CD4-positive, alpha-beta memory T cell (primary cell): ENCODE measurements at regions of chr16 and their contacts with region 1.

Region 1: GRCh38 chr16:26524281-26524680 is 542.4 kb upstream of the C16orf82 start:
- DNase-seq: no peak
- H3K4me3 ChIP-seq: no peak overlapping the region
- H3K4me3 Mint-ChIP-seq: no peak overlapping the region
- H3K27ac ChIP-seq: no peak overlapping the region
- H3K27ac Mint-ChIP-seq: no peak overlapping the region
- H3K4me1 ChIP-seq: no peaks in the 10 kb centered on the region
- H3K4me1 Mint-ChIP-seq: no peaks in the 10 kb centered on the region
- H3K27me3 ChIP-seq: no peaks in the 10 kb centered on the region
- H3K27me3 Mint-ChIP-seq: peaks cover 3 to 8% of the 10 kb centered on the region in 2 donors

Region 2: GRCh38 chr16:26475596-26475995 is 48.7 kb before region 1 on chr16:
- CTCF ChIA-PET with region 1: no interaction called
- POLR2A ChIA-PET with region 1: no interaction called
- intact Hi-C with region 1: loop called (anchors 5 kb)
- DNase-seq: no peak
- H3K4me3 ChIP-seq: no peak overlapping the region
- H3K4me3 Mint-ChIP-seq: no peak overlapping the region
- H3K27ac ChIP-seq: no peak overlapping the region
- H3K27ac Mint-ChIP-seq: no peak overlapping the region
- H3K4me1 ChIP-seq: no peaks in the 10 kb centered on the region
- H3K4me1 Mint-ChIP-seq: no peaks in the 10 kb centered on the region
- H3K27me3 ChIP-seq: no peaks in the 10 kb centered on the region
- H3K27me3 Mint-ChIP-seq: no peaks in the 10 kb centered on the region

Region 3: DNA sequence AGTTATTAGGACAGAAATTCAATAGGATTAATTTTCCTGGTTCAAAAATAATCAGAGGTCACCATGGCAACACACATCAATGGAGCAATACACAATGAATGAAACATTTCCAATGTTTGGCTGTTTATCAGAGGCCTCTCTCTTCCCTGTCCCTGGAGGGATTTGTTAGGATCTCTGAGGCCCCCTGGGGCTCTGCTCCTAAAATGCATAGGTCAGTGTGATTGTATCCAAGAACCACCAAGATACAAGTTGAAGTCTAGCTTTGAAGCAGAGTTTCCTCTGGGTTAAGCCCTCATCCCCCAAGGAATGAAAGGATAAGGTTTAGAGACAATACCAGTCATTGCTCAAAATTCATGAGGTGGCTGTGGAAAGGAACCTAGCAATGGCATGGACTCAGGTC is 18.8 kb before region 1 on chr16:
- CTCF ChIA-PET with region 1: no interaction called
- POLR2A ChIA-PET with region 1: no interaction called
- intact Hi-C with region 1: no loop called
- DNase-seq: no peak
- H3K4me3 ChIP-seq: no peak overlapping the region
- H3K4me3 Mint-ChIP-seq: no peak overlapping the region
- H3K27ac ChIP-seq: no peak overlapping the region
- H3K27ac Mint-ChIP-seq: no peak overlapping the region
- H3K4me1 ChIP-seq: no peaks in the 10 kb centered on the region
- H3K4me1 Mint-ChIP-seq: no peaks in the 10 kb centered on the region
- H3K27me3 ChIP-seq: no peaks in the 10 kb centered on the region
- H3K27me3 Mint-ChIP-seq: peaks cover 0 to 2% of the 10 kb centered on the region in 2 donors

Region 4: DNA sequence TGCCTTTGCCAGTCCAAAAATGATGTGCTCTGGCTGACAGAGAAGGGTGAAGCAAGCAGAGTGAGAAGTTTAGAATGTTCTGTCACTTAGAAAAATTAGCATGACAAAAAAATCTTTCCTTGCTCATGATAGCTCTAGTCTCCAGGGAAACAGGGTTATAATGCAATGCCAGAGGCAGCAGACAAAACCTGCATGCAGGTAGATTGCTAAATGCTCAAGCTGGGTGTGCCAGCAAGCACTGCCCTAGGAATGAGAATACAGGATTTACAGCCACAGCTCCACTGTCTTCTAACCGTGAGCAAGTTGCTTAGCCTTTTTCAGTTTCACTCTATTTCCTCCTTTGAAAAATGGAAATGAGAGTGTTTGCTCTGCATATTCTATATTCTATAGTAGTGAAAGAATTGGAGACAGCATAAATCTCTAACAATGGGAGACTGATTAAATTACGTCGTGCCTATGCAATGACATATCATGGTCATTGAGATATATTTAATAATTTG is 25.9 kb after region 1 on chr16:
- CTCF ChIA-PET with region 1: no interaction called
- POLR2A ChIA-PET with region 1: no interaction called
- intact Hi-C with region 1: no loop called
- DNase-seq: no peak
- H3K4me3 ChIP-seq: no peak overlapping the region
- H3K4me3 Mint-ChIP-seq: no peak overlapping the region
- H3K27ac ChIP-seq: no peak overlapping the region
- H3K27ac Mint-ChIP-seq: no peak overlapping the region
- H3K4me1 ChIP-seq: no peaks in the 10 kb centered on the region
- H3K4me1 Mint-ChIP-seq: no peaks in the 10 kb centered on the region
- H3K27me3 ChIP-seq: no peaks in the 10 kb centered on the region
- H3K27me3 Mint-ChIP-seq: peaks cover 2 to 3% of the 10 kb centered on the region in 2 donors

Region 5: DNA sequence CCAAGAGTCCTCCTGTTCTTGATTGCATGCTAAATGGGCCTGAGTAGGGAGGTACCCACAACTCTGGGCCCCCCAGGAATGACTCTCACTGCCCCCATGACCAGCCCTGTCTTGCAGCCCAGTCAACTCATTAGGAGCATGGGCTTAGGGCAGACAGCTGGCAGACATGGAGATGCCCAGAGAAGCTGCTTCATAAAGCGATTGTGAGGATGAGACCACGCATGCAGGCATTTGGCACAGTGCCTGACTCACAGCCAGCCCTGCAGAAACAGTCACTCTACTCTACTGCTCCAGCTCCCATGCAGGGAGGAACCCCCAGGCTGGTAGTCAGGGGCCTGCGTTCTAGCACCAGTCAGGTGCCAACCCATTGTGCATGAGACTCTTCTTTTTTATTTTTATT is 534.0 kb after region 1 on chr16:
- CTCF ChIA-PET with region 1: no interaction called
- POLR2A ChIA-PET with region 1: no interaction called
- intact Hi-C with region 1: no loop called
- DNase-seq: no peak
- H3K4me3 ChIP-seq: no peak overlapping the region
- H3K4me3 Mint-ChIP-seq: no peak overlapping the region
- H3K27ac ChIP-seq: no peak overlapping the region
- H3K27ac Mint-ChIP-seq: no peak overlapping the region
- H3K4me1 ChIP-seq: no peaks in the 10 kb centered on the region
- H3K4me1 Mint-ChIP-seq: no peaks in the 10 kb centered on the region
- H3K27me3 ChIP-seq: no peaks in the 10 kb centered on the region
- H3K27me3 Mint-ChIP-seq: peaks cover 6 to 7% of the 10 kb centered on the region in 2 donors